Activated T-helper 1 cell treated with anti-CD3 and anti-CD28 coated beads, Interleukin-12 subunit alpha, Interleukin-12 subunit beta, Interleukin-2, Interleukin-4 antibody, amounts not matched to agents 30 ng/mL and 10 ng/mL and 1 ng/mL, durations not matched to agents 14 hours and 24 hours and 36 hours (primary cell): ENCODE measurements at regions of chr5 and their contacts with region 1.

Region 1: GRCh38 chr5:119340597-119341218 is 15.1 kb upstream of the TNFAIP8 start:
- DNase-seq: peak; percentile 63
- H3K4me3 Mint-ChIP-seq: peak overlapping the region; percentile 83
- H3K27ac Mint-ChIP-seq: peak overlapping the region; percentile 100
- H3K4me1 Mint-ChIP-seq: peaks cover 95% of the 10 kb centered on the region
- H3K27me3 Mint-ChIP-seq: no peaks in the 10 kb centered on the region

Region 2: GRCh38 chr5:119287547-119288073 is 53.1 kb before region 1 on chr5:
- intact Hi-C with region 1: loop called (anchors 1 kb)
- DNase-seq: no peak
- H3K4me3 Mint-ChIP-seq: peak overlapping the region; percentile 72
- H3K27ac Mint-ChIP-seq: peak overlapping the region; percentile 93
- H3K4me1 Mint-ChIP-seq: peaks cover 99% of the 10 kb centered on the region
- H3K27me3 Mint-ChIP-seq: no peaks in the 10 kb centered on the region

Region 3: GRCh38 chr5:119328753-119329602 is 11.7 kb before region 1 on chr5:
- intact Hi-C with region 1: loop called (anchors 1 kb)
- DNase-seq: peak; percentile 52
- H3K4me3 Mint-ChIP-seq: peak overlapping the region; percentile 52
- H3K27ac Mint-ChIP-seq: peak overlapping the region; percentile 95
- H3K4me1 Mint-ChIP-seq: peaks cover 91% of the 10 kb centered on the region
- H3K27me3 Mint-ChIP-seq: no peaks in the 10 kb centered on the region